ENCODE measurements at regions of chr14 and their contacts with region 1.

Region 1: DNA sequence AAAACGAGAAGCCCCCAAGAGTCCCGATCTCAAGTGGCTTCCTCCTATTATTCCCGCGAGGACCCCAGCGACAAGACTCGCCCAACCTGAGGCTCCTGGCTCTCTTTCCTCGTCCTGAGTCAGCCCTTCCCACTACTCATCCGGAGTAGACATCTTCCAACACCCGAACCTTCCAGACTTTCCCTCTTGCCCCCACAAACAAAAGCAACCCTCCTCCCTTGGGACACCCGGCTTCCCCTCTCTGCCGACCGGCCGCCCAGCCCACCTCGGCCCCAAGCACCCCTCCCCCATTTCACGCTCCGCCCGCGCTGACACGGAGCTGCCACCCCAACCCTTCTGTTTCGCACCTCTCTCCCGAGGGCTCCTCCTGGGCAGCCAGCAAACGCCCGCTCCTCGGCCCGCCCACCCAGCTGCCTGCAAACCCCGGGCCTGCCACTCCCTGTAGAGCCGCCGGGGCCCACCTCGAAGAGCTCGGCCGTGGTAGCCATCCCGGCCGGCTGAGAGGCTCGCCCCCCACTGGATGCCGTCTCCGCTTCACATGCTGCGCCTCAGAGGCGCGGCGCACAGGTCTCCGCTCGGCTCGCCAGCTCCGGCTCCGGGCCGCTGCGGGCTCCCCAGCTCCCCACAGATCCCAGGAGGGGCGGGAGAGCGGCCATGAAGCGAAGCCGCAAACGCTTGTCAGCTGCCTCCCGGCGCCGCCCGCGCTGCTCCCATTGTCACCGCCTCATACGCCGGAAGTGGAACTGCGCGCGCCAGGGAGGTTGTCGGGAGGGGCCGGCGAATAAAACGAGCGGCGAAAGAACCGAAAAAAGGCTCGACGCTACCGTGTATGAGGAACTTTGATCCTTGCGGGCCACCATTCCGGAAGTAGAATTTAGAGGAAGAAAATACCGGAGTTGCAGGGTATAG is at the starts of genes AP5M1 and EXOC5:
- DNase-seq: peak; percentile 85
- ATAC-seq: peak; percentile 83
- H3K4me3 Mint-ChIP-seq: peak within 1 kb of the TSS; percentile 98
- H3K27ac Mint-ChIP-seq: peak within 1 kb of the TSS; percentile 98
- H3K4me1 Mint-ChIP-seq: peaks cover 61% of the 10 kb centered on the region
- H3K27me3 Mint-ChIP-seq: no peaks in the 10 kb centered on the region
- CTCF ChIP-seq: no peak
- total RNA-seq, gene AP5M1: 48.4 and 54.6 TPM in 2 replicates
- total RNA-seq, gene EXOC5: 51.3 and 53.8 TPM in 2 replicates

Region 2: GRCh38 chr14:55411426-55412389 is 1856.7 kb before region 1 on chr14 and contains the start of gene ATG14:
- CTCF ChIA-PET with region 1: no interaction called
- POLR2A ChIA-PET with region 1: no interaction called
- intact Hi-C with region 1: loop called (anchors 5 kb)
- DNase-seq: peak; percentile 73
- ATAC-seq: peak; percentile 99
- H3K4me3 Mint-ChIP-seq: peak within 1 kb of the TSS; percentile 93
- H3K27ac Mint-ChIP-seq: peak within 1 kb of the TSS; percentile 76
- H3K4me1 Mint-ChIP-seq: peaks cover 32% of the 10 kb centered on the region
- H3K27me3 Mint-ChIP-seq: peaks cover 12% of the 10 kb centered on the region
- CTCF ChIP-seq: no peak
- total RNA-seq, gene ATG14: 9.7 and 12.1 TPM in 2 replicates

Region 3: GRCh38 chr14:55665067-55665675 is 1603.2 kb before region 1 on chr14:
- CTCF ChIA-PET with region 1: no interaction called
- POLR2A ChIA-PET with region 1: no interaction called
- intact Hi-C with region 1: no loop called
- DNase-seq: no peak
- ATAC-seq: no peak
- H3K4me3 Mint-ChIP-seq: no peak overlapping the region
- H3K27ac Mint-ChIP-seq: no peak overlapping the region
- H3K4me1 Mint-ChIP-seq: no peaks in the 10 kb centered on the region
- H3K27me3 Mint-ChIP-seq: no peaks in the 10 kb centered on the region
- CTCF ChIP-seq: no peak

Region 4: GRCh38 chr14:56117765-56118610 is 1150.4 kb before region 1 on chr14 and contains the start of gene PELI2:
- CTCF ChIA-PET with region 1: no interaction called
- POLR2A ChIA-PET with region 1: interaction called, 4 read pairs
- intact Hi-C with region 1: loop called (anchors 2 kb)
- DNase-seq: peak; percentile 83
- ATAC-seq: peak; percentile 83
- H3K4me3 Mint-ChIP-seq: peak within 1 kb of the TSS; percentile 95
- H3K27ac Mint-ChIP-seq: peak within 1 kb of the TSS; percentile 93
- H3K4me1 Mint-ChIP-seq: peaks cover 54% of the 10 kb centered on the region
- H3K27me3 Mint-ChIP-seq: peaks cover 2% of the 10 kb centered on the region
- CTCF ChIP-seq: no peak
- total RNA-seq, gene PELI2: 5.5 and 6.1 TPM in 2 replicates

Region 5: DNA sequence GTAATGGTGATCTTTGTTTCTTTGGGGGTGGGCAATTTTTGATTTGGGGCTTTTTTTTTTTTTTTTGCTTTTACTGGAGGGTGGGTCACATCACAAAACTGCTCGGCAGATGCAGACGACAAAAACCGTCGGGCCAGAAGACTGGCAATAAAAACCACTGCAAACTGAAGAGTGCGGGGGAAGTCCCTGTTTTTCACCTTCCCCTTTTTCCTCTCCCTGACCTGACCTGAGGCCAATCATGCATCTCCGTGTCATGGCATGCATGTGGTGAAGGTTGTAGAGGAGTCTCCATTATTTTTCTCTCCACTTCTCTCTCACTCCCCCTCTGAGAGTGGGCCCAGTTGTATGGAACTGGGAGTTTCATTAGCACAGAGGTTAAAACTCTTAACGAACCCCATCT is 57.8 kb after region 1 on chr14:
- CTCF ChIA-PET with region 1: no interaction called
- POLR2A ChIA-PET with region 1: interaction called, 3 read pairs
- intact Hi-C with region 1: loop called (anchors 2 kb)
- DNase-seq: no peak
- ATAC-seq: peak; percentile 99
- H3K4me3 Mint-ChIP-seq: peak overlapping the region; percentile 15
- H3K27ac Mint-ChIP-seq: peak overlapping the region; percentile 50
- H3K4me1 Mint-ChIP-seq: peaks cover 13% of the 10 kb centered on the region
- H3K27me3 Mint-ChIP-seq: peaks cover 5% of the 10 kb centered on the region
- CTCF ChIP-seq: no peak

Region 6: DNA sequence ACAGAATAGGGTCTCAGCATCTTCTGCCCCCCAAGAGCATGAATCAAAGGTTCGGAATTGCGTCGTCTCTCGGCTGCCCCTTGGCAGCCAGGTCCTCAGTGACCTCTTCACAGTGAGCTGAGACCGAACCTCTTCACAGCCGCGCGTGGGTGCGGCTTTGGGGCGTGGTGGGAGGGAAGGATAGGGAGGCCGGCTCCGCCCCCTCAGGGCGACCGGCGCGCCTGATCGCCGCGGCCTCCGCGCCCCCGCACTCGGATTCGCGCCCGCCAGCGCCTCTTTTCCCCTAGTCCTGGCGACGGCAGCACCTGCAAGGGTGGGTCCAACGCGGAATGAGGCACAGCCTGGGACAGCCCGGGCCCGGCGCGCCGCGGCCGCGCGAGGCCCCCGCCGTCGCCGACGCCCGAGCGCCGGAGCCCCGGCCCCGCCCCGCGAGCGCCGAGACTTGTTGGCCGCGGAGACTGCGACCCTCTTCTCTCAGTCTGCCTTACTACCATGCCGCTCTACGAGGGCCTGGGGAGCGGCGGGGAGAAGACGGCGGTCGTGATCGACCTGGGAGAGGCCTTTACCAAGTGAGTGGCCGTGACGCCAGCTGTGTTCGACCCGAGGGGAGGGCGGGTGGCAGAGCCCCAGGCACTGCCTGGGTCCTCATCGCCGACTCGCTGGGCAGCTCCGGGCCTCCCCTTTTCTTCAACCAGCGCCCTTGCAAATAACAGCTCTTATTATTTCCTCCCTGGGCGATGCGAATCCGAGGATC is 931.5 kb after region 1 on chr14 and contains the start of gene ACTR10:
- CTCF ChIA-PET with region 1: no interaction called
- POLR2A ChIA-PET with region 1: no interaction called
- intact Hi-C with region 1: loop called (anchors 10 kb)
- DNase-seq: peak; percentile 93
- ATAC-seq: peak; percentile 88
- H3K4me3 Mint-ChIP-seq: peak within 1 kb of the TSS; percentile 94
- H3K27ac Mint-ChIP-seq: peak within 1 kb of the TSS; percentile 93
- H3K4me1 Mint-ChIP-seq: peaks cover 28% of the 10 kb centered on the region
- H3K27me3 Mint-ChIP-seq: no peaks in the 10 kb centered on the region
- CTCF ChIP-seq: no peak
- total RNA-seq, gene ACTR10: 36.5 and 40.5 TPM in 2 replicates

Region 7: DNA sequence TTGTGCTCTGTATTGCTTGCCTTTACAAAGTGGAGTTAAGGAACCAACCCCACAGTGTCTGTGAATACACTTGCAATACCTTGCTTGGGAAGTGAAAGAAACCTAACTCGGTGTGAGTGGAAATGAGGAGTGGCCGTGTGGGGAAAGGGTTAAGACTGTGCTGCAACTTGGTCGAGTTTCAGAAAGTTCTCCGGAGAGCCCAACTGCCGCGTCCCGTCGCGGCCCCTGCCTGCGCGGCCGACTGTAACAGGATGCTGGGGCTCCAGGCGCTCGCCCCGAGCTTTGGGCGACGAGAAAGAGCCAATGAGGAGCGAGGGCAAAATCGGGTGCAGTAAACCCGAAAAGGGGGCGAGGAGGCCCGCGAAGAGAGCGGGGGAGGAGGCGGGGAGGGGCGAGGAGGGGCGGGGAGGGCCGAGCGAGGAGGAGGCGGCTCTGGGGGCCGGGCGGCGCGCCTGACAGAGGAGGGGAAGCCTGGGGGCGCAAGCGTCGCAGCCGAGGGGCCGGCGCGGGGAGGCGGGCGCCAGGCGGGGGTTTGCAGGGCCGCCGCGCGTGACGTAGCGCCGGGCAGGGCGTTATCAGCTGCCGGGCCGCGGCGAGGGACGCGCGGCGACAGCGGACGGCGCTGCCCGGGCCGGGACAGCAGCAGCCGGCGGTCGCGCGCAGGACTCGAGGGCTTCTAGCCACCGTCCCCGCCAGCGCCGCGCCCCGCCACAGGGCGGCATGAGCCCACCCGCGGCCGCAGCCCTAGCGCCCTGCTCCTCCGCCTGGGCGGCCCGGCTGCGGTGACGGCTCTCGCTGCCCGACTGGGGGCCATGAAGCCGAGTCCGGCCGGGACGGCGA is 1369.2 kb after region 1 on chr14 and contains the start of gene DACT1:
- CTCF ChIA-PET with region 1: no interaction called
- POLR2A ChIA-PET with region 1: no interaction called
- intact Hi-C with region 1: loop called (anchors 10 kb)
- DNase-seq: peak; percentile 52
- ATAC-seq: peak; percentile 80
- H3K4me3 Mint-ChIP-seq: peak within 1 kb of the TSS; percentile 94
- H3K27ac Mint-ChIP-seq: peak within 1 kb of the TSS; percentile 90
- H3K4me1 Mint-ChIP-seq: peaks cover 46% of the 10 kb centered on the region
- H3K27me3 Mint-ChIP-seq: peaks cover 17% of the 10 kb centered on the region
- CTCF ChIP-seq: no peak
- total RNA-seq, gene DACT1: 3.0 and 3.5 TPM in 2 replicates